Kidney (tissue), 22 donors: ENCODE measurements at regions of chr13 and their contacts with region 1.

Region 1: GRCh38 chr13:79541426-79542049 is 60.6 kb downstream of the NDFIP2 start:
- DNase-seq: peak in 2 of 5 donors; percentile 70 to 77
- H3K4me3 ChIP-seq: no peak overlapping the region
- H3K27ac ChIP-seq: no peak overlapping the region
- H3K4me1 ChIP-seq: no peaks in the 10 kb centered on the region
- H3K27me3 ChIP-seq: no peaks in the 10 kb centered on the region
- CTCF ChIP-seq: peak; percentile 73

Region 2: DNA sequence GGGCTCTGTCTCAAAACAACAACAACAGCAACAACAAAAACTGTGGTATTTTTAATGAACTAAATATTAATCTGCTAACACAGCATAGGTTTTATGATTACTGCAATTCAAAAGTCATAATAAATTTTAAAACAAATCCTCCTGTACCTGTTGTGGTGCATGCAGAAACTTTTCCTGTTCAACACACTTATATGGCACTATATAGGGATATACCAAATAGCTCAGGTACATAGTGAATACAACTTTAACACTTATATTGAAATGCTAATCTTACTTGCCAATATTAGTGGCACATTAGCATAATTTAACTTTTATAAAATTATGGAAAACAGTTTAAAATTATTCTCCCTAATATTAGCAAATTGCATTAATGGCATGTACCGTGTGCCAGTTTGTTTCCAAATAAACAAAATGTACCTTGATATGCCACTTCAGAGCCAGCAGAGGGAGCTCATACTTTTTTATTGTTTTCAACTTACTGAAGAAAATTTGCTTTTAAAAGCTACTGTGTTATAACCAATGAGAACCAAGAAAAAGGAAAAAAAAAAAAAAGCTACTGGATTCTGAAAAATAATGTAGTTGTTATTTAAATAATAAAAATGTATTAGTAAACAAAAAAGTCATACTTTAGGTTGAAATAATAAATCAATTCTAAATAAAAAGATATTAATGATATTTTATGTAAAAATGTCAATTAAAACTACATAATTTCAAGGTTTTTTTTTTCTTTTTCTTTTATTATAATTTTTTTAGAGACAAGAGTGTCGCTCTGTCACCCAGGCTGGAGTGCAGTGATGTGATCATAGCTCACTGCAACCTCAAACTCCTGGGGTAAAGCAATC is 117.5 kb before region 1 on chr13:
- intact Hi-C with region 1: loop called (anchors 5 kb)
- DNase-seq: peak in 2 of 5 donors; percentile 48 to 68
- H3K4me3 ChIP-seq: no peak overlapping the region
- H3K27ac ChIP-seq: no peak overlapping the region
- H3K4me1 ChIP-seq: no peaks in the 10 kb centered on the region
- H3K27me3 ChIP-seq: no peaks in the 10 kb centered on the region
- CTCF ChIP-seq: peak; percentile 82